Body of pancreas (tissue), 4 donors: ENCODE measurements at regions of chr3 and their contacts with region 1.

Region 1: DNA sequence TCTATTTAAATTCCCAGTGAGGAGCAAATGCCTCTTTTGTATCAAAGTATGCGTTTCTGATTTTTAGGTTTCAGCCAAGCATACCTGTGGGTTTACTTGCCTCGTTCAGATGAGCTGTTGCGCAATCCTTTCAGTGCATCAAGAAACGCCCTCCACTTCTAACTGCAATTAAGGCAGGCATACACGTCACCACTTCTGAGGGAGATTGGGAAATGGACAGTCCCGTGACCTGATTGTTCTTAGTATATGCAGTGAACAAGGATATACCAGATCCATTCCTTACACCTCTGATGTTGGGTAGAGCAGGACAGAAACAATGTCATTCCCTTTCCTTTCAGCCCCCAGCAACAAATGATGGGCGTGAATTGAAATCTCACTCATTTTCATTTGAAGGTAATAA is 219.0 kb downstream of the ITPR1 start:
- DNase-seq: peak in 1 of 4 donors; percentile 42
- ATAC-seq: no peak
- H3K4me3 ChIP-seq: no peak overlapping the region
- H3K27ac ChIP-seq: no peak overlapping the region
- H3K4me1 ChIP-seq: peaks cover 6% of the 10 kb centered on the region
- H3K27me3 ChIP-seq: no peaks in the 10 kb centered on the region
- CTCF ChIP-seq: no peak
- POLR2A ChIP-seq: no peak

Region 2: DNA sequence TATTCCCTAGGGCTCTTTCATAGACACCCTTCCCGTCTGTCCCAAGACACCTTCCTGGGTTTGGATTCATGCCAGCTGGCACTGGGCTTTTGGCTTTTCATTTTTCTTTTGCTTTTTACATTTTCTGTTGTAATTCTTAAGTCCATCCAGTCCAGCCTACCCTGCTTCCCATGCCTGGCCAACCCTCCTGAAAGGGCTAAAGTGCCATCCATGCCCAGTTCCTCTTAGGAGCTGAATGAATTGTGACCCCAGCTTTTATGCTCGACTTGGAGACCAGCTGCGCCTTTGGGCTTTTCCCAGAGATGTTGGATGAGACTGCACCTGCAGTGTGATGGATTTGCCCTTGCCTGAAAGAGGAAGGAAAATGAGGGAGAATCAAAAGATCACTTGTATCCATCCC is 887.1 kb before region 1 on chr3:
- intact Hi-C with region 1: no loop called
- DNase-seq: no peak
- ATAC-seq: no peak
- H3K4me3 ChIP-seq: no peak overlapping the region
- H3K27ac ChIP-seq: no peak overlapping the region
- H3K4me1 ChIP-seq: no peaks in the 10 kb centered on the region
- H3K27me3 ChIP-seq: no peaks in the 10 kb centered on the region
- CTCF ChIP-seq: no peak
- POLR2A ChIP-seq: no peak

Region 3: GRCh38 chr3:4504340-4505261 is 207.5 kb before region 1 on chr3:
- intact Hi-C with region 1: no loop called
- DNase-seq: peak in 3 of 4 donors; percentile 29 to 41 (median 36)
- ATAC-seq: no peak
- H3K4me3 ChIP-seq: no peak overlapping the region
- H3K27ac ChIP-seq: peak overlapping the region in 2 of 4 donors; percentile 7 to 27
- H3K4me1 ChIP-seq: peaks cover 6% of the 10 kb centered on the region
- H3K27me3 ChIP-seq: no peaks in the 10 kb centered on the region
- CTCF ChIP-seq: no peak
- POLR2A ChIP-seq: no peak

Region 4: DNA sequence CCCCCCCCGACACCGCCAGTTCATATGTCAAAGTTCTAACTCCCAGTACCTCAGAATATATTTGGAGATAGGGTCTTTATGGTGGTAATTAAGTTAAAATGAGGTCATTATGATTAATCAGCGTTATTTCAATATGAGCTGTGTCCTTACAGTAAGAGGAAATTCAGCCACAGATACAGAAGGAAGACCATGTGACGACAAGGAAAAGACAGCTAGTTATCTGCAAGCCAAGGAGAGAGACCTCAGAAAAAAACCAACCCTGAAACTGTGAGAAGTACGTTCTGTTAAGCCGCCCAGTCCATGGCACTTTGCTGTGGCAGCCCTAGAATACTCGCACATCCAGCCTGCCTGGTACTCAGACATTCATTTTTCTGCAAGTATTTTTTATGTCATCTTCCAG is 347.6 kb after region 1 on chr3:
- intact Hi-C with region 1: loop called (anchors 5 kb)
- DNase-seq: no peak
- ATAC-seq: no peak
- H3K4me3 ChIP-seq: no peak overlapping the region
- H3K27ac ChIP-seq: no peak overlapping the region
- H3K4me1 ChIP-seq: peaks cover 7% of the 10 kb centered on the region
- H3K27me3 ChIP-seq: no peaks in the 10 kb centered on the region
- CTCF ChIP-seq: no peak
- POLR2A ChIP-seq: no peak

Region 5: DNA sequence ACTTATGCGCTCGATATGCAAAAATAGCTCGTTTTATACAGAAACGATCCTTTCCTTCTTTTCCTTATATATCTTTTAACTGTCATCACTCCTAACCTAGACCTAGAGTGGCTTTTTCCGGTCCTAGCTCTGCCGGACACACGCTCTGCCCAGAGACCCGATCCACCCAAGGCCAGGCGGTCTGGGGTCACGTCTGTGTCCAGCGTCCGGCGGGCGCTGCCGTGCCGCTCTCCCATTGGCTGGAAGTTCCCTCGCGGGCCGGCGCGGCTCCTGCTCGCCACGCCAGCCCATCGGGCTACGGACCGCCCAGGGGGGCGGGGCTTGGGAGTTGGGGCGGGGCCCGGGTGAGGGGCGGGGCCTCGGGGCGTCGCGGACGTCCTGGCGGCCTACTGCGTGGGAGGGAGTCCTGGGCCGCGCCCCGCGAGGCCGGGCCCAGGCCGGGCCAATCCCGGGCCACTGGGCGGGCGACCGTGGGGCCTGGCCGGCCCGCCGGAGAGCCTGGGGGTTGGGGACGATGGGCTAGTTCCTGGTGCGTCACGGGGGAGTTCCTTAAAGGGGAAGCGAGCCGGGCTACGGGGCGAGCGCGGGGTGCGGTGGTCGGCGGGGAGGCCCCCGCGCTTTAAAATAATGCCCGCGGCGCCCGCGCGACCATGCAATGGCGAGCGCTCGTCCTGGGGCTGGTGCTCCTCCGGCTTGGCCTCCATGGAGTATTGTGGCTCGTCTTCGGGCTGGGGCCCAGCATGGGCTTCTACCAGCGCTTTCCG is 475.2 kb after region 1 on chr3 and contains the start of gene EDEM1:
- intact Hi-C with region 1: loop called (anchors 10 kb)
- DNase-seq: peak; percentile 95 to 96 (median 95)
- ATAC-seq: peak; percentile 94
- H3K4me3 ChIP-seq: peak within 1 kb of the TSS; percentile 73 to 76
- H3K27ac ChIP-seq: peak within 1 kb of the TSS; percentile 85 to 99 (median 95)
- H3K4me1 ChIP-seq: peaks cover 36% of the 10 kb centered on the region
- H3K27me3 ChIP-seq: no peaks in the 10 kb centered on the region
- CTCF ChIP-seq: no peak
- POLR2A ChIP-seq: peak; percentile 82 to 87 (median 86)
- total RNA-seq, gene EDEM1: 23.9 to 46.1 TPM